Stomach (tissue), 19 donors: ENCODE measurements at regions of chr13 and their contacts with region 1.

Region 1: GRCh38 chr13:22944378-22944777 is 236.4 kb upstream of the SGCG start:
- DNase-seq: no peak
- H3K4me3 ChIP-seq: no peak overlapping the region
- H3K27ac ChIP-seq: no peak overlapping the region
- H3K4me1 ChIP-seq: no peaks in the 10 kb centered on the region
- H3K27me3 ChIP-seq: peaks cover 0 to 18% (median 0%) of the 10 kb centered on the region in 3 donors
- CTCF ChIP-seq: no peak
- EP300 ChIP-seq: no peak
- POLR2A ChIP-seq: no peak

Region 2: GRCh38 chr13:22812794-22813193 is 131.6 kb before region 1 on chr13:
- intact Hi-C with region 1: no loop called
- DNase-seq: peak; percentile 51 to 63
- H3K4me3 ChIP-seq: no peak overlapping the region
- H3K27ac ChIP-seq: no peak overlapping the region
- H3K4me1 ChIP-seq: peaks cover 0 to 18% (median 8%) of the 10 kb centered on the region in 4 donors
- H3K27me3 ChIP-seq: no peaks in the 10 kb centered on the region
- CTCF ChIP-seq: no peak
- EP300 ChIP-seq: no peak
- POLR2A ChIP-seq: no peak

Region 3: DNA sequence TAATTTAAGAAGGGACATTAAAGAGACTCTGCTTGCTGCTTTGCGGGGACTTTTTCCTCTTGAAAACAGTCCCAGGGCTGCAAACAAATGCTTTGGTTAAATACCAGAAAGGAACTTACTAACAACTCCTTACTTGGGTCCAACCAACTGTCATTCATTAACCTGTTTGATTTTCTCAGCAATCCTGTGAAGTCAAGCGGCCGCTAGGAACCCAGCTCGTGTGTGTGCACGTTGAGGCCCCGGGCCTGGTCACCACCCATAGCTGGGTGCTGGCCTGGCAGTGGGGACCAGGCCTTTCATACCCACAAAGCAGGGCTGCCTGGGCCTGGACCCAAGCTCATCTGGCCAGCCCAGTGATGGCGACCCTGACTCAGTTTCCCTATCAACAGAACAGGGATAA is 1415.7 kb after region 1 on chr13:
- intact Hi-C with region 1: loop called (anchors 10 kb)
- DNase-seq: no peak
- H3K4me3 ChIP-seq: no peak overlapping the region
- H3K27ac ChIP-seq: no peak overlapping the region
- H3K4me1 ChIP-seq: no peaks in the 10 kb centered on the region
- H3K27me3 ChIP-seq: no peaks in the 10 kb centered on the region
- CTCF ChIP-seq: no peak
- EP300 ChIP-seq: no peak
- POLR2A ChIP-seq: no peak